CD8-positive, alpha-beta T cell (primary cell): ENCODE measurements at regions of chr14 and their contacts with region 1.

Region 1: GRCh38 chr14:23320774-23321571 is at the start of gene PABPN1:
- DNase-seq: peak; percentile 93 to 100 (median 97)
- ATAC-seq: peak; percentile 85
- H3K4me3 ChIP-seq: peak within 1 kb of the TSS; percentile 67 to 79
- H3K4me3 Mint-ChIP-seq: peak within 1 kb of the TSS; percentile 91
- H3K27ac ChIP-seq: peak within 1 kb of the TSS; percentile 80 to 96
- H3K27ac Mint-ChIP-seq: peak within 1 kb of the TSS; percentile 99
- H3K4me1 ChIP-seq: peaks cover 23% of the 10 kb centered on the region
- H3K4me1 Mint-ChIP-seq: peaks cover 29% of the 10 kb centered on the region
- H3K27me3 ChIP-seq: no peaks in the 10 kb centered on the region
- H3K27me3 Mint-ChIP-seq: no peaks in the 10 kb centered on the region
- CTCF ChIP-seq: no peak
- total RNA-seq, gene PABPN1: 186 to 191 TPM

Region 2: DNA sequence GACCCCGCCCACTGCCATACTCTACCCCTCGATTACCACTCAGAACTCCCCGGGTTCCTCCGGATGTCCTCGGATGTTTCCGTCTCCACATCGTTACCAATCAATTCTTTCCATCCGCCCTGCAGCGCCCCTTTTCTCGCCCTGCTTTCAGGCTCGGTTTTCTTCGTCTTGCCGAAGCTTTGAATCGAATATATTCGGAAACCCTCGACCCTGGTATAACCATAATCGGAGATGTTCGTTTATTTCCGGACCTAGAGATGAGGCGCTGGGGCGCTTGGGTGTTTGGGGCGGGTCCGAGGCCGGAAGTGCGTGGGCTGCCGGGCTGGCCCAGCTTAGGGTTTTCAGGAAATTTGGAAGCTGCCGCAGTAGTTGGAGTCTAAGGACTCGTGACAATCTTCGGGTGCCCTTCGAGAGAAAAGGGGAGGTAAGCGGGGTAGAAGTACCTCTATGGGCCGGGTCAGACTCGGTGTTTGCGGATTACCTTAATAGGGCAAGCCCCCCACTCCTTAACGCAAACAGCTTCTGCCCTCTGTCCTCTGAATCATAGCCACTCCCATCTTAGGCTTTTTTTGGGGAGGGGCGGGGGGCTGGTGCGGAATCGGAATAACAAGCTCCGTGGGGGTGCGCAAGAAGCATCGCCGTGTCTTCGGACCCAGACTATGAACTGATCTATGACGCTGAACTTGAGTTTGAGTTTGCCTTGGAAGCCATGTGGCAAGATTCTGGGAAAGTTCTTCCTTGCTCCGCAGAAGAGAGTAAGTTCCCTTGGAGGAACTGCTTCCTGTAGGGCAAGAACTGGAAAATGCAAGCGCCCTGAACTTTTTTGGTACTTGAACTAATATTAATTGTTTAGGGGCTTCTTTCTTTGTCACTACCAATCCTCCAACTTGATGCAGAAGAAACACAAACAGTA is 225.5 kb before region 1 on chr14 and contains the start of gene C14orf119:
- CTCF ChIA-PET with region 1: no interaction called
- POLR2A ChIA-PET with region 1: interaction called, 11 read pairs
- intact Hi-C with region 1: loop called (anchors 1 kb)
- DNase-seq: peak in 8 of 9 experiments; percentile 98 to 100 (median 100)
- ATAC-seq: peak; percentile 86
- H3K4me3 ChIP-seq: peak within 1 kb of the TSS; percentile 81 to 93
- H3K4me3 Mint-ChIP-seq: no peak within 1 kb of the TSS
- H3K27ac ChIP-seq: peak within 1 kb of the TSS; percentile 93 to 98
- H3K27ac Mint-ChIP-seq: no peak within 1 kb of the TSS
- H3K4me1 ChIP-seq: peaks cover 39% of the 10 kb centered on the region
- H3K4me1 Mint-ChIP-seq: peaks cover 51% of the 10 kb centered on the region
- H3K27me3 ChIP-seq: no peaks in the 10 kb centered on the region
- H3K27me3 Mint-ChIP-seq: no peaks in the 10 kb centered on the region
- CTCF ChIP-seq: no peak
- total RNA-seq, gene C14orf119: 3.5 to 3.8 TPM

Region 3: DNA sequence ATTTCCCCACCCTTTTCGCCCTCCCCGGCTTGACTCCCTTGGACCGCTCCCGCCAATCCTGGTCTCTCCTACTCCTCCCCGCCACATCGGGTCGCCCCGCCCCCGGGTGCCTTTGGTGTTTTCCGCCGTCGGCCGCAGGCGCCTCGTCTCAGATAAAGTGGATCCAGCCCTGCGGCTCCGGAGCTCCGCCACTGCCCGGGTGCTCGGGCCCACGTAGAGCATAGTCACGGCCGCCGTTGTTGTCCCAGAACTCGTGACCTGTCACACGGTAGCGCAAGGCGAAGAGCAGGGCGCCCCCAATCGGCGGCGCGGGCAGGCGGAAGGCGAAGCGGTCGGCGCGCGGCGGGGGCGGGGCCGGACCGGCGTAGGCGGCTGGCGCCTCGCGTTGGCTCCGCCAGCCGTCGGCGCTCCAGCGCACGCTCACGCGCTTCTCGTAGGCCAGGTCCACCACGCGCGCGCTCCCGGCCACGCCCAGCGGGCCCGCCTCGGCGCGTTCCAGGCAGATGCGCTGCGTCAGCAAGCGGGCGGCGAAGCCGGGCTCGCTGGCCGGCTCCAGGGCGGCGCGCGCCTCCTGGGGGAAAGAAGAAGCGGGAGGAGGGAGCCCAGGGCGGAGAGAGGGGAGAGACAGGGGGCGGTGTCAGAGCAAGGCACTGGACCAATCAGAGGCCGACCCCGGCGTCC is 19.5 kb before region 1 on chr14:
- CTCF ChIA-PET with region 1: interaction called, 53 read pairs
- POLR2A ChIA-PET with region 1: interaction called, 202 read pairs
- intact Hi-C with region 1: loop called (anchors 1 kb)
- DNase-seq: peak; percentile 93 to 99 (median 97)
- ATAC-seq: peak; percentile 74
- H3K4me3 ChIP-seq: peak overlapping the region; percentile 77 to 97
- H3K4me3 Mint-ChIP-seq: peak overlapping the region; percentile 97
- H3K27ac ChIP-seq: peak overlapping the region; percentile 97
- H3K27ac Mint-ChIP-seq: peak overlapping the region; percentile 98
- H3K4me1 ChIP-seq: peaks cover 19% of the 10 kb centered on the region
- H3K4me1 Mint-ChIP-seq: peaks cover 27% of the 10 kb centered on the region
- H3K27me3 ChIP-seq: no peaks in the 10 kb centered on the region
- H3K27me3 Mint-ChIP-seq: peaks cover 14% of the 10 kb centered on the region
- CTCF ChIP-seq: peak; percentile 68

Region 4: GRCh38 chr14:23379366-23380196 is 58.6 kb after region 1 on chr14:
- CTCF ChIA-PET with region 1: interaction called, 69 read pairs
- POLR2A ChIA-PET with region 1: no interaction called
- intact Hi-C with region 1: no loop called
- DNase-seq: peak; percentile 41 to 81 (median 69)
- ATAC-seq: peak; percentile 88
- H3K4me3 ChIP-seq: no peak overlapping the region
- H3K4me3 Mint-ChIP-seq: no peak overlapping the region
- H3K27ac ChIP-seq: no peak overlapping the region
- H3K27ac Mint-ChIP-seq: no peak overlapping the region
- H3K4me1 ChIP-seq: no peaks in the 10 kb centered on the region
- H3K4me1 Mint-ChIP-seq: no peaks in the 10 kb centered on the region
- H3K27me3 ChIP-seq: no peaks in the 10 kb centered on the region
- H3K27me3 Mint-ChIP-seq: peaks cover 14% of the 10 kb centered on the region
- CTCF ChIP-seq: peak; percentile 76

Region 5: GRCh38 chr14:23406244-23406643 is 85.3 kb after region 1 on chr14:
- CTCF ChIA-PET with region 1: no interaction called
- POLR2A ChIA-PET with region 1: no interaction called
- intact Hi-C with region 1: no loop called
- DNase-seq: no peak
- ATAC-seq: no peak
- H3K4me3 ChIP-seq: no peak overlapping the region
- H3K4me3 Mint-ChIP-seq: no peak overlapping the region
- H3K27ac ChIP-seq: no peak overlapping the region
- H3K27ac Mint-ChIP-seq: no peak overlapping the region
- H3K4me1 ChIP-seq: no peaks in the 10 kb centered on the region
- H3K4me1 Mint-ChIP-seq: no peaks in the 10 kb centered on the region
- H3K27me3 ChIP-seq: no peaks in the 10 kb centered on the region
- H3K27me3 Mint-ChIP-seq: peaks cover 31% of the 10 kb centered on the region
- CTCF ChIP-seq: no peak

Region 6: GRCh38 chr14:23953464-23954278 is 632.7 kb after region 1 on chr14 and contains the start of gene DHRS4:
- CTCF ChIA-PET with region 1: no interaction called
- POLR2A ChIA-PET with region 1: no interaction called
- intact Hi-C with region 1: loop called in 1 of 2 experiments (anchors 5 kb)
- DNase-seq: peak; percentile 71 to 93 (median 83)
- ATAC-seq: peak; percentile 96
- H3K4me3 ChIP-seq: peak within 1 kb of the TSS; percentile 85 to 90
- H3K4me3 Mint-ChIP-seq: peak within 1 kb of the TSS; percentile 97
- H3K27ac ChIP-seq: peak within 1 kb of the TSS; percentile 49 to 65
- H3K27ac Mint-ChIP-seq: peak within 1 kb of the TSS; percentile 91
- H3K4me1 ChIP-seq: peaks cover 10% of the 10 kb centered on the region
- H3K4me1 Mint-ChIP-seq: peaks cover 32% of the 10 kb centered on the region
- H3K27me3 ChIP-seq: no peaks in the 10 kb centered on the region
- H3K27me3 Mint-ChIP-seq: no peaks in the 10 kb centered on the region
- CTCF ChIP-seq: peak; percentile 90
- total RNA-seq, gene DHRS4: 6.8 to 7.1 TPM